ENCODE measurements at regions of chr5 and their contacts with region 1.

Region 1: GRCh38 chr5:9156282-9156681 is 389.6 kb downstream of the SEMA5A start:
- DNase-seq: no peak
- H3K4me3 ChIP-seq: no peak overlapping the region
- CTCF ChIP-seq: peak; percentile 84

Region 2: GRCh38 chr5:9166202-9167112 is 10.2 kb after region 1 on chr5:
- CTCF ChIA-PET with region 1: interaction called, 35 read pairs
- POLR2A ChIA-PET with region 1: no interaction called
- DNase-seq: no peak
- H3K4me3 ChIP-seq: no peak overlapping the region
- CTCF ChIP-seq: no peak

Region 3: DNA sequence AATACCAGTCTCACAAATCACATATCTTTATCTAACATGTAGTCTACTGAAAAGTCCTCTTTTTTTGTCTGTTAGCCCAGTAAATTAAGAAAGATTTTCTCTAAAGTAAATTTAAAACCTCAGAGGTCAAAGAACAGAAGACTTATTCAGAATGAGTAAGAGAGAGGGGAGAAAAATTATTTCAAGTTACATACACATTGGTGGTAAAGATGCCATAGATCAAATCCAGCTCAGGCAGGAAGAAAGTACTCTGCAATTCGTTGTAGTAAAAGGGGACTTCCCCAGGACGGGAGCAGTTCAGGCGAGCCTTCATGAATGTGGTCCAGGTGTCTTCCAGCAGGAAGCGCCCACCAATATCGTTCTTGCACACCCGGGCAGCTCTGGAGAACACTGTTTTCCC is 45.5 kb after region 1 on chr5:
- CTCF ChIA-PET with region 1: interaction called, 10 read pairs
- POLR2A ChIA-PET with region 1: no interaction called
- DNase-seq: no peak
- H3K4me3 ChIP-seq: no peak overlapping the region
- CTCF ChIP-seq: no peak

Region 4: DNA sequence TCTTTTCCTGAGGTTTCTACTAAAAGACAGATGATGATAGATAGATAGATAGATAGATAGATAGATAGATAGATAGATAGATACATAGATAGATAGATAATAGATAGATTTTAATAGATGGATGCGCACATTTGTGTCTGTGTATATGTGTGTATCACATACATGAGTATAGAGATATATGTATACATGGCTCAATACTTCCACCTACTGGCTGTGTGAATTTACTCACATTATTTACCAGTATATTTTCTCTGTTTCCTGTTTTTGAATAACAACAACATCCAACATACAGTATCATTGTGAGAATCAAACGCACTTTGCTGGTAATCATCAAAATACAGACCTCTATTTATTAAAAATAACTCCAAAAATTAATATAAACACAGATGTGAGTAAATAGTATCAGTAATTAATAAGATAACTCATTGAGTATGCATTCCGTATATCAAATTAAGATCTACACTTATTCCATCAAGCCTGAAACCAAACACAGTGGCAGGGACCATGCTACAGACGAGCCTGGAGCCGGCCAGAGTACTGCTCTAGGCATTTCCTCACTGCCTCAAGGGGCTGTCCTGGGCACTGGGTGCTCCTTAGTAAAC is 51.6 kb after region 1 on chr5:
- CTCF ChIA-PET with region 1: interaction called, 17 read pairs
- POLR2A ChIA-PET with region 1: no interaction called
- DNase-seq: no peak
- H3K4me3 ChIP-seq: no peak overlapping the region
- CTCF ChIP-seq: peak; percentile 25

Region 5: DNA sequence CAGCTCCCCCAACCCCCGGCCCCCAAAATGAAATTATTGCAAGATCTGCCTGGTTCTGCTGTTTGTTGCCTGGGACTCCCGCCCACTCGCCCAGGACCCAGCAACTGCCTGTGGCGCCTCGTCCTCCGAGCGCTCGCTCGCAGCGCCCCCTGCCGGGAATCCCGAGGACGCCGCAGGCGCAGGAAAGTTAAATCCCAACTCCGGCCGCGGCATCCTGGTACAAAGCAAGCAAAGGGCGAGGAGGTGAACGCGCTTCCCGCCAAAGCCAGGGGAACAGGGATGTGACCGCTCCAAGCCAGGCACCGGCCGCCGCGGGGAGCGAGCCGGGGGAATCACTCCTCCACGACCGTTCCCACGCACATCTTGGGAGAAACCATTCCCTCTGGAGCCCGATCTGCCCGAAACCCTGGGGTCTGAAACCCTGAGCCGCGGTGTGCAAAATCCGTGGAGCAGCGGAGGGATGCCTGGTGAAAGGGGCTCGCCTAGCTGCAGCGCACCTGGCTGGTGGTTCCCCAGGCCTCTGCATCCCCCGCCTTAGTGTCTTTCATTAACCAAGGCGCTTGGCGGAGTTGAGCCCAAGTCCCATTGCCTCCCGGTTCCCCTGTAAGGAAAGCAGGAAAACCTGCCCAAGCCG is 388.3 kb after region 1 on chr5:
- CTCF ChIA-PET with region 1: interaction called, 17 read pairs
- POLR2A ChIA-PET with region 1: no interaction called
- DNase-seq: no peak
- H3K4me3 ChIP-seq: peak overlapping the region; percentile 93
- CTCF ChIP-seq: peak; percentile 92

Measured in AG04449 (cell line).